ENCODE measurements at regions of chr13 and their contacts with region 1.

Region 1: GRCh38 chr13:48975856-48976575 is at the start of gene FNDC3A:
- DNase-seq: peak; percentile 97
- H3K4me3 Mint-ChIP-seq: peak within 1 kb of the TSS; percentile 96
- H3K27ac Mint-ChIP-seq: peak within 1 kb of the TSS; percentile 100
- H3K4me1 Mint-ChIP-seq: peaks cover 35% of the 10 kb centered on the region
- H3K27me3 Mint-ChIP-seq: no peaks in the 10 kb centered on the region
- total RNA-seq, gene FNDC3A: 22.1 and 23.5 TPM in 2 replicates

Region 2: GRCh38 chr13:48532506-48533499 is 443.2 kb before region 1 on chr13 and contains the start of gene RCBTB2:
- intact Hi-C with region 1: loop called (anchors 1 kb)
- DNase-seq: peak; percentile 100
- H3K4me3 Mint-ChIP-seq: peak within 1 kb of the TSS; percentile 87
- H3K27ac Mint-ChIP-seq: peak within 1 kb of the TSS; percentile 96
- H3K4me1 Mint-ChIP-seq: peaks cover 26% of the 10 kb centered on the region
- H3K27me3 Mint-ChIP-seq: peaks cover 15% of the 10 kb centered on the region
- total RNA-seq, gene RCBTB2: 1.6 and 1.7 TPM in 2 replicates

Region 3: DNA sequence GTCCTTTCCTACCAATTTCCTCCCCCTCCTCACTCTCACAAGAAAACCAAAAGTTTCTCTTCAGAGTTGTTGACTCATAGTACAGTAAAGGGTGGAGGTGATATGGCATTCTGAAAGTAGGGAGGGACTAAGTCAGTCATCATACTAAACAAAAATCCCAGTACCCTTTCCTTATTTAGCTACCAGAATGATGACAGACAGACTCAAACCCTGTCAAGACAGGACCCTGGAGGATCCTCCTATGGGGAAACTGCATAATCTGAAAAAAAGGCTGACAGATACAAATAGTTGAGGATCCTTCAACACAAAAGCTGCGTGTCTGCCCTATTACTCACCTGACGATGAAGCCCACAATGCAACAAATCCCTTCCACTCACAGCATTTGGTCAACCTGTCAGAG is 266.8 kb before region 1 on chr13:
- intact Hi-C with region 1: no loop called
- DNase-seq: peak; percentile 35
- H3K4me3 Mint-ChIP-seq: no peak overlapping the region
- H3K27ac Mint-ChIP-seq: no peak overlapping the region
- H3K4me1 Mint-ChIP-seq: peaks cover 3% of the 10 kb centered on the region
- H3K27me3 Mint-ChIP-seq: no peaks in the 10 kb centered on the region

Region 4: GRCh38 chr13:48885027-48885395 is 91.0 kb before region 1 on chr13:
- intact Hi-C with region 1: loop called (anchors 2 kb)
- DNase-seq: no peak
- H3K4me3 Mint-ChIP-seq: peak overlapping the region; percentile 39
- H3K27ac Mint-ChIP-seq: peak overlapping the region; percentile 51
- H3K4me1 Mint-ChIP-seq: peaks cover 45% of the 10 kb centered on the region
- H3K27me3 Mint-ChIP-seq: no peaks in the 10 kb centered on the region

Region 5: DNA sequence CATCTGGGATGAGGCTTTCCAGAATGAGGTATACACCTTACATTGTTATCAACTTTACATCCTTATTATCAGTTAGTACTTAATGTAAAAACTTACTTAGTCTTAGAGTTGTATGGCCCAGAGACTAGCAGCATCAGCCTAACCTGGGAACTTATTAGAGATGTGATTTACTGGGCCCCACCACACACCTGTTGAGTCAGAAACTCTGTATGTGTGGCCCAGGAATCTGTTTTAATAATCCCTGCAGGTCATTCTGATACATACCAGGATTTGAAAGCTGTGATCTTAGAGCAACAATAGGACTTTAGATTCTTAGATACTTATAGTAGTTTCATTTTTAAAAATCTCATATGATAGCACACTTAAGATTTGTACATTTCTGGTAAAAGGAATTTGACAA is 17.1 kb after region 1 on chr13:
- intact Hi-C with region 1: loop called (anchors 2 kb)
- DNase-seq: no peak
- H3K4me3 Mint-ChIP-seq: no peak overlapping the region
- H3K27ac Mint-ChIP-seq: no peak overlapping the region
- H3K4me1 Mint-ChIP-seq: peaks cover 6% of the 10 kb centered on the region
- H3K27me3 Mint-ChIP-seq: no peaks in the 10 kb centered on the region

Region 6: GRCh38 chr13:49247643-49248621 is 271.9 kb after region 1 on chr13 and contains the start of gene CDADC1:
- intact Hi-C with region 1: loop called (anchors 10 kb)
- DNase-seq: peak; percentile 98
- H3K4me3 Mint-ChIP-seq: peak within 1 kb of the TSS; percentile 91
- H3K27ac Mint-ChIP-seq: peak within 1 kb of the TSS; percentile 96
- H3K4me1 Mint-ChIP-seq: peaks cover 23% of the 10 kb centered on the region
- H3K27me3 Mint-ChIP-seq: peaks cover 18% of the 10 kb centered on the region
- total RNA-seq, gene CDADC1: 8.0 and 9.5 TPM in 2 replicates